H1 (cell line): ENCODE measurements at regions of chr22 and their contacts with region 1.

Region 1: GRCh38 chr22:23128269-23129108 is 13.3 kb downstream of the RSPH14 start:
- DNase-seq: peak; percentile 70 to 96
- H3K4me3 ChIP-seq: no peak overlapping the region
- H3K27ac ChIP-seq: no peak overlapping the region
- H3K4me1 ChIP-seq: peaks cover 0 to 1% (median 0%) of the 10 kb centered on the region in 4 experiments; a peak in 1 of 7 replicates
- H3K27me3 ChIP-seq: peaks cover 0 to 5% (median 3%) of the 10 kb centered on the region in 4 experiments; a peak in 3 of 7 replicates
- CTCF ChIP-seq: peak; percentile 76 to 98 (median 85)
- EP300 ChIP-seq: no peak
- POLR2A ChIP-seq: no peak
- RAD21 ChIP-seq: peak; percentile 98 to 99

Region 2: GRCh38 chr22:23106906-23107367 is 21.6 kb before region 1 on chr22:
- CTCF ChIA-PET with region 1: interaction called, 10 read pairs
- POLR2A ChIA-PET with region 1: no interaction called
- DNase-seq: no peak
- H3K4me3 ChIP-seq: no peak overlapping the region
- H3K27ac ChIP-seq: no peak overlapping the region
- H3K4me1 ChIP-seq: no peaks in the 10 kb centered on the region; a peak in 1 of 7 replicates
- H3K27me3 ChIP-seq: no peaks in the 10 kb centered on the region; a peak in 3 of 7 replicates
- CTCF ChIP-seq: no peak
- EP300 ChIP-seq: no peak
- POLR2A ChIP-seq: no peak
- RAD21 ChIP-seq: no peak

Region 3: DNA sequence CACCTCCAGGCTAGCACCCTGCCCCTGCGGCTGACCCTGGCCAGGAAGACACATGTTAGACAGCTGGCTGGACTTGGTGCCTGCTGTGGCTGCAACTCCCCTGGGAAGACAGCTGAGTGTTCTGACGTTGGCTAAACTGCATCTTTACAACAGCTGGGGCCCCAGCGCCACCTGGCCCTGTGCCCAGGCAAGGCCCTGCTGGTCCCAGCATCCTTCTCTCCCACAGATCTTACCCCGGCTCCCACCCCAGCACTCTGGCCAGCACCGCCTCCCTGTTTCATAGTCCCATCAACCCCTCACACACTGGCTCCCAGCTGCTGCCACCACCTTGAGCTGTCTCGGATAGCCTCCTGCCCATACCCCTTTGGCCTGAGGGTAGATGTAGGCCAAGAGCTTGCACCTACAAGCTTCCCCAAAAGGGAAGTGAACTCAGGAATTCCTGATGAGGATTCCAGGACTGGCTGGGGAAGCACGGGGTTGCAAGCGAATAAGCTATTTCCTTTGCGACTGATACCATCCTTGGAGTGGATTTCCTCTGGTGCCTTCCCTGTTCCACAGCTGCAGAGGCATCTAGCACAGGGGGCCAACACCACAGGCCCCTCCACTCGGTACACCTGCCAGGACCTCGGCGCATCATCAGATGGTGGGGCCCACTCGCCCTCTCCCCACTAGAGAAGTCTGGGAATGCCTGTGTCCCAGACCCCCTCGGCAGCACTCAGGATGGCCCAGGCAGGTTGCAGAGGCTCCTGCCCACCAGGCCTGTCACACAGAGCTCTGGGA is 15.2 kb before region 1 on chr22:
- CTCF ChIA-PET with region 1: interaction called, 32 read pairs
- POLR2A ChIA-PET with region 1: no interaction called
- DNase-seq: no peak
- H3K4me3 ChIP-seq: no peak overlapping the region
- H3K27ac ChIP-seq: no peak overlapping the region
- H3K4me1 ChIP-seq: peaks cover 0 to 10% (median 4%) of the 10 kb centered on the region in 4 experiments; a peak in 3 of 7 replicates
- H3K27me3 ChIP-seq: peaks cover 0 to 3% (median 0%) of the 10 kb centered on the region in 4 experiments; a peak in 3 of 7 replicates
- CTCF ChIP-seq: no peak
- EP300 ChIP-seq: no peak
- POLR2A ChIP-seq: no peak
- RAD21 ChIP-seq: no peak